ENCODE measurements at regions of chr19 and their contacts with region 1.

Region 1: GRCh38 chr19:9796113-9796773 is 22.6 kb downstream of the FBXL12 start:
- DNase-seq: peak; percentile 74 to 95 (median 88)
- ATAC-seq: peak; percentile 57
- H3K4me3 ChIP-seq: no peak overlapping the region
- H3K4me1 ChIP-seq: peaks cover 2% of the 10 kb centered on the region
- CTCF ChIP-seq: peak; percentile 60

Region 2: GRCh38 chr19:9205501-9206113 is 590.6 kb before region 1 on chr19:
- intact Hi-C with region 1: loop called in 1 of 2 experiments (anchors 10 kb)
- DNase-seq: peak in 2 of 3 donors; percentile 79
- ATAC-seq: peak; percentile 67
- H3K4me3 ChIP-seq: no peak overlapping the region
- H3K4me1 ChIP-seq: no peaks in the 10 kb centered on the region
- CTCF ChIP-seq: peak; percentile 75

Region 3: DNA sequence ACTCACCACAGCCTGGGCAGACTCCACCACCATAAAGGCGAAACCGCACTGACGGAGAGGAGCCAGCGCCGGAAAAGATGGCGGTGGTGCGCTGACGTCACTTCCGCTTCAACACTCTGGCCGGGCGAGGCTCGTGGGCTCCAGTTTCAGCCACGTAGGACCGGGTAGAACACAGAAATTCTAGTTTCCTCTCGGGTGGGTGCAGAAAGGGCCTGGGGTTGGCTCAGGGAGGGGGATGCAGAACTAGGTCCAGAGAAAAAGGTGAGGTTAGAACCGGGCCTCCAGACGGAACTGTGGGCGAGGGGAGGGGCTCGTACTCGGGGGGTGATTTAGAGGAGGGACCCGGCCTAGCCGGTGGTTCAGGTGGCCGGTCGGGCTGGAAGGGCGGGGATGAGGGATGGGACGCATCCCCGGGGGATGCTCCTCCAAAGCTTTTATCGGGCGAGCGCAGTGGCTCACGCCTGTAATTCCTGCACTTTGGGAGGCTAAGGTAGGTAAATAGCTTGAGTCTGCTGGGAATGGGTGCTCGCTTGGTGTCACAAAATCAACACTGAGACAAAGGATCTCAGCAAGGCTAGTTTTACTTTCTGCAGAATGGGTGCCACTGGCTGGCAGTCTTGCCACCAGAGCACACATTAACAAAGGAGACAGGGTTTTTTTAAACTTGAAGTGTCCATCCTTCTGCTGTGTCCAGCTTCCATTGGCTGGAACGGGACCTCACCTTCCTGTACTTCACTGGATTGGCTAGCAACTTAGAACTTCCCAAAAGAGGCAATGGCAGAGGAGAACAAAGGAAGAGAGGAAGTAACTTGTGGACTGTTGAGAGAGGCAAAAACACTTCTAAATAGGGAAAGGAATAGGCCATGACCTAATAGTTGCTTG is 174.8 kb before region 1 on chr19 and contains the start of gene ZNF561:
- intact Hi-C with region 1: loop called (anchors 5 to 10 kb)
- DNase-seq: peak; percentile 88 to 92 (median 91)
- ATAC-seq: peak; percentile 95
- H3K4me3 ChIP-seq: peak within 1 kb of the TSS; percentile 53
- H3K4me1 ChIP-seq: peaks cover 7% of the 10 kb centered on the region
- CTCF ChIP-seq: no peak
- total RNA-seq, gene ZNF561: 22.6 to 42.2 (median 31.9) TPM